ENCODE measurements at regions of chr13 and their contacts with region 1.

Region 1: GRCh38 chr13:46295491-46296114 is 83.9 kb downstream of the LRRC63 start:
- DNase-seq: peak; percentile 78
- H3K4me3 Mint-ChIP-seq: peak overlapping the region; percentile 61
- H3K27ac Mint-ChIP-seq: peak overlapping the region; percentile 93
- H3K4me1 Mint-ChIP-seq: peaks cover 53% of the 10 kb centered on the region
- H3K27me3 Mint-ChIP-seq: no peaks in the 10 kb centered on the region

Region 2: DNA sequence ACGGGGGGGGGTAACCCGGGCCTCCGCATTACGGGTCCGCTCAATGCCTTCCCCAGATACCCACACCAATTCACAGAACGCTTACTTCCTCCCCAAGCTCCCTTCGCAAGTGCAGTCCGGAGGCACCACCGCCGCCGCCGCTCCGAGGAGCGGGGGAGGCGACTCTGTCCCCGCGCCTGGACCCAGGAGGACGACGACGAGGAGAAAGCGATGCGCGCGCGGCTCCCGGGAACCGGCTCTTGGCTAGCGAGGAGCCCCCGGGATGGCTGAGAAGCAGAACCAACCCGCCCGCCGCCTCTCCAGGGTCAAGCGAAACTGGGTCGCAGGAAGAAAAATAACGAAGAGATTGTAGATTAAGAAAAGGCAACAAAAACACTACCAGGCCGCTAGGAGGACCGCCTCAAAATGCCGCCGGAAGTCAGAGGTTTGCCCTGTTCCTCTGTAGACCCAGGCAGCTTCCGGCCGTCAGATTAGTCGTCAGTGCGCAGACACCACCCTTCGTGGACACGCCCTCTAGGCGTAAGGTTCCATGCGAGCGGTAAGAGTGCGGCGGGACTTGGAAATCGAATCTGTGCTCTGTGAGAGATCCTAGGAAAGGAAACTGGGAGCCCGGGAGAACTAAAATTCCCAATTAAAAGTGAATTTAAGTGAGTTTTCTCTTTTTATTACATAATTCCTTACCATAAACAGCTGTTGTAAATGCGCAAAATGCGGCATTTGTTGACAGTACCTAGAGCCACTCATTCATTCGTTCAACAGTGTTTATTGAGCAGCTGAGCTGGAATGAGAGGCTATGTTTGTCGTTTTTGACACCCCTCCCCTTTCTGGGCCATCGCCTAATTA is 243.1 kb before region 1 on chr13 and contains the start of gene ZC3H13:
- CTCF ChIA-PET with region 1: no interaction called
- POLR2A ChIA-PET with region 1: no interaction called
- intact Hi-C with region 1: loop called (anchors 2 kb)
- DNase-seq: peak; percentile 96
- H3K4me3 Mint-ChIP-seq: peak within 1 kb of the TSS; percentile 90
- H3K27ac Mint-ChIP-seq: peak within 1 kb of the TSS; percentile 93
- H3K4me1 Mint-ChIP-seq: peaks cover 28% of the 10 kb centered on the region
- H3K27me3 Mint-ChIP-seq: peaks cover 8% of the 10 kb centered on the region
- total RNA-seq, gene ZC3H13: 37.0 to 47.3 TPM

Region 3: DNA sequence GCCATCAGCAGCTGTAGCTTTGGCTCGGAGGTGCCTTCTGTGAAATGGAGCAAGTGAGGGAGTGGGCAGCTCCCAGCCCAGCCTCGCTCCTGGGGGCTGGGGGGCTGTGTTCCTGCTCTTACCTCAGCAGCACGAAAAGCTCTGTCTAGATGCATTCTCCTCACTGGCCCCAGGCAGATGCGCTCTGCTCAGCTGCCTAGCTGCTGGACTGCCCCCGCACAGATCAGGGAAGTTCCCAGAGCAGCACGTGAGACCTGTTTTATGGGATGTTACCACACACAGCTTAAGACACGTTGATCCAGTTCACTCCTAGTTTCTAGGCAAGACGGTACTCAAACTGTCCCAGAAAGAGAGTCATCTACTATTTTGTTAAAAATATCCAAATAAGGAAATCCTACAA is 127.3 kb before region 1 on chr13:
- CTCF ChIA-PET with region 1: interaction called, 7 read pairs
- POLR2A ChIA-PET with region 1: no interaction called
- intact Hi-C with region 1: loop called (anchors 1 kb)
- DNase-seq: peak; percentile 83
- H3K4me3 Mint-ChIP-seq: peak overlapping the region; percentile 69
- H3K27ac Mint-ChIP-seq: peak overlapping the region; percentile 86
- H3K4me1 Mint-ChIP-seq: peaks cover 95% of the 10 kb centered on the region
- H3K27me3 Mint-ChIP-seq: no peaks in the 10 kb centered on the region

Region 4: DNA sequence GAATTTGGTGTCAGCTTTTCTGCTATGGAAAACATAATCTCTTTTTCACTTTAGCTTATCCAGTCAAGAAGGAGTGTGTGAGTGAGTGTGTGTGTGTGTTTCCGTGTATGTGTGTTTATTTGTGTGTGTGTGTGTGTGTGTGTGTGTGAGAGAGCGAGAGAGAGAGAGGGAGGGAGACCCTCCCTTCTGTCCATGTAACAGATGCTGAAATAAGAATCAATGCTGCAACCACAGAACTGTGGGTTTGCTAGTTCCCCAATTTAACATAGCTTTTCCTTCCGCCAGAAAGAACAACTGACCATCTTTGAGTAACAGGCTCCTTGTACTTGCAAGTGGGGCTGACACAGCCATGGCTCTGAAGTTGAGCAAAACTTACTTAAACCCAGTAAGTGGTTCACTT is 118.8 kb before region 1 on chr13:
- CTCF ChIA-PET with region 1: interaction called, 7 read pairs
- POLR2A ChIA-PET with region 1: interaction called, 4 read pairs
- intact Hi-C with region 1: loop called (anchors 2 kb)
- DNase-seq: no peak
- H3K4me3 Mint-ChIP-seq: peak overlapping the region; percentile 97
- H3K27ac Mint-ChIP-seq: peak overlapping the region; percentile 96
- H3K4me1 Mint-ChIP-seq: peaks cover 66% of the 10 kb centered on the region
- H3K27me3 Mint-ChIP-seq: no peaks in the 10 kb centered on the region

Region 5: GRCh38 chr13:46341112-46341711 is 45.6 kb after region 1 on chr13:
- CTCF ChIA-PET with region 1: no interaction called
- POLR2A ChIA-PET with region 1: no interaction called
- intact Hi-C with region 1: loop called (anchors 1 kb)
- DNase-seq: peak; percentile 68
- H3K4me3 Mint-ChIP-seq: peak overlapping the region; percentile 54
- H3K27ac Mint-ChIP-seq: peak overlapping the region; percentile 82
- H3K4me1 Mint-ChIP-seq: peaks cover 38% of the 10 kb centered on the region
- H3K27me3 Mint-ChIP-seq: peaks cover 5% of the 10 kb centered on the region

Region 6: GRCh38 chr13:46475541-46475991 is 180.0 kb after region 1 on chr13:
- CTCF ChIA-PET with region 1: no interaction called
- POLR2A ChIA-PET with region 1: no interaction called
- intact Hi-C with region 1: no loop called
- DNase-seq: no peak
- H3K4me3 Mint-ChIP-seq: no peak overlapping the region
- H3K27ac Mint-ChIP-seq: no peak overlapping the region
- H3K4me1 Mint-ChIP-seq: no peaks in the 10 kb centered on the region
- H3K27me3 Mint-ChIP-seq: peaks cover 1% of the 10 kb centered on the region

Measured in activated CD4-positive, alpha-beta memory T cell treated with anti-CD3 and anti-CD28 coated beads for 36 hours (primary cell).